Activated CD8-positive, alpha-beta T cell treated with anti-CD3 and anti-CD28 coated beads for 36 hours (primary cell): ENCODE measurements at regions of chr15 and their contacts with region 1.

Region 1: DNA sequence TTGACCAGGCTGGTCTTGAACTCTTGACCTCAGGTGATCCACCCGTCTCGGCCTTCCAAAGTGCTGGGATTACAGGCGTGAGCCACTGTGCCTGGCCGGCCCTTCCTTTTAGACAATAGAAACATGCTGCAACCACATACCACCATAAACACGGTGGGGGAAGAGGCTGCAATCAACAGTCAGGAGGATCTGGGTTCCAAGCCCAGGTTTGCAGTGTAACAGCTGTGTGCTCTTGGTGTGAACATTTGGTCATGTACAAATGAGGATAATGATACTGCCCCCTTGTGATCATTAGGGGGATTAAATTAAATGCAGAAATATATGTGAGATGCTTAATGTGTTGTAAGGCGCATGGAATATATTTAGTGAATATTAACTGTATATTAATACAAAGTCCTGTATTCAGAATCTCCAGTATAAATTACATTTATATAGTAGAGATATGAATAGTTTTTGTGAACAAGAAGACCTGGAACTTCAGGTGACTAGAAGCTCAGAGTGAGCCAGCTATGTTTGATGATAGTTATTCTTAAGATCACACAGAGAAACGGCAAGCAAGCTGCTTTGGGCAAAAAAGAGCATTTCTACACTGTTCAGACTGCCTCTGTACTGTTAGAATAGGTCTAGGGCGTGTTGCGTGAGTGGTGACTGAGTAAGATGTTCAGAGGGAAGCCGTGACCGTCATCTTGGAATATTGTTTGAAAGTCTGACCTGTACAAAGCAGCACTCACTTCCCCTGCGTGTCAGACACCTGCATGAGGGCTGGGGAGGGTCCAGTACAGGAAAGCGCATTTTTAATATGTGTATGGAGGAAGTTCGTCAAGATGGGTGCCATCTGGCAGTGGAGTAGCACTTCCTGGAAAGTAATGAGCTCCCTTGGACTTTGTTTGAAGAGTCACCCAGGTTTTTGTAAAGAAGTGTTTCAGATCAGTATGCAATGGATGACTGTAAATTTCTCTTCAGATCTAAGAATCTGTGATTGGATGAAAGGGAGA is 125.8 kb downstream of the PGPEP1L start:
- DNase-seq: peak; percentile 14
- ATAC-seq: peak; percentile 51
- H3K4me3 Mint-ChIP-seq: no peak overlapping the region
- H3K27ac Mint-ChIP-seq: no peak overlapping the region
- H3K4me1 Mint-ChIP-seq: peaks cover 11% of the 10 kb centered on the region
- H3K27me3 Mint-ChIP-seq: no peaks in the 10 kb centered on the region
- CTCF ChIP-seq: peak; percentile 77

Region 2: GRCh38 chr15:98779463-98780071 is 102.3 kb before region 1 on chr15:
- CTCF ChIA-PET with region 1: interaction called, 53 read pairs
- POLR2A ChIA-PET with region 1: interaction called, 3 read pairs
- intact Hi-C with region 1: no loop called
- DNase-seq: peak; percentile 84
- ATAC-seq: peak; percentile 84
- H3K4me3 Mint-ChIP-seq: peak overlapping the region; percentile 20
- H3K27ac Mint-ChIP-seq: no peak overlapping the region
- H3K4me1 Mint-ChIP-seq: peaks cover 37% of the 10 kb centered on the region
- H3K27me3 Mint-ChIP-seq: no peaks in the 10 kb centered on the region
- CTCF ChIP-seq: peak; percentile 94

Region 3: GRCh38 chr15:98865397-98866339 is 16.2 kb before region 1 on chr15:
- CTCF ChIA-PET with region 1: interaction called, 22 read pairs
- POLR2A ChIA-PET with region 1: no interaction called
- intact Hi-C with region 1: no loop called
- DNase-seq: peak; percentile 75
- ATAC-seq: peak; percentile 92
- H3K4me3 Mint-ChIP-seq: peak overlapping the region; percentile 70
- H3K27ac Mint-ChIP-seq: peak overlapping the region; percentile 88
- H3K4me1 Mint-ChIP-seq: peaks cover 27% of the 10 kb centered on the region
- H3K27me3 Mint-ChIP-seq: no peaks in the 10 kb centered on the region
- CTCF ChIP-seq: no peak

Region 4: GRCh38 chr15:98893407-98893806 is 11.6 kb after region 1 on chr15:
- CTCF ChIA-PET with region 1: interaction called, 14 read pairs
- POLR2A ChIA-PET with region 1: no interaction called
- intact Hi-C with region 1: no loop called
- DNase-seq: no peak
- ATAC-seq: no peak
- H3K4me3 Mint-ChIP-seq: no peak overlapping the region
- H3K27ac Mint-ChIP-seq: no peak overlapping the region
- H3K4me1 Mint-ChIP-seq: no peaks in the 10 kb centered on the region
- H3K27me3 Mint-ChIP-seq: no peaks in the 10 kb centered on the region
- CTCF ChIP-seq: no peak

Region 5: DNA sequence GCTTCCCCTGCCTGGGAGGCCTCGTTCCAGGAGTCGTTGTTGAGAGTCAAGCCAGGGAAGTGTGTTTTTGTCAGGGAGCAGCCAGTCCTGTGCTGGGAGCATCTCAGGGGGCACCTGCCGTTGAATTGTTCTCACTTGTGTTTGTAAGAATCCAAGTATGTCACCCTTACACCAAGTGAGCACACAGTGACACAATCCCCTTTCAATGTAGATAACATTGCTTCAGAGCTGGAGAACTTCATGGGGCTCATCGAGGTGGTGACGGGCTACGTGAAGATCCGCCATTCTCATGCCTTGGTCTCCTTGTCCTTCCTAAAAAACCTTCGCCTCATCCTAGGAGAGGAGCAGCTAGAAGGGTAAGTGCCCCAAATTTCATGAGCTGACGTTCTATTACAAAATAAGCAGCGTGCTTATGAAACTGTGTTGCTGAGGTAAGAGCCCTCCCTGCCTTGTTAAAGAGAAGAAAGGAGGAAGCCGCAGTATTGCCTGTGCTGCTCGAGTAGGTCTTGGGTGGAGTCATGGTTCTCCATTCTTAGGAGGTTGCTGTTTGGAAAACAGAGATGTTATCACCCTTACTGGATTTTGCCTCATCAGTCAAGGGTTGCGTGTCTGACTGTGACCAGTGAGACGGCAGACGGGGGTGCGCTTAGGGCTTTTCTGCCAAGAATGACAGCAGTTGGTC is 17.6 kb after region 1 on chr15:
- CTCF ChIA-PET with region 1: interaction called, 12 read pairs
- POLR2A ChIA-PET with region 1: interaction called, 3 read pairs
- intact Hi-C with region 1: no loop called
- DNase-seq: no peak
- ATAC-seq: no peak
- H3K4me3 Mint-ChIP-seq: no peak overlapping the region
- H3K27ac Mint-ChIP-seq: no peak overlapping the region
- H3K4me1 Mint-ChIP-seq: peaks cover 9% of the 10 kb centered on the region
- H3K27me3 Mint-ChIP-seq: no peaks in the 10 kb centered on the region
- CTCF ChIP-seq: no peak

Region 6: DNA sequence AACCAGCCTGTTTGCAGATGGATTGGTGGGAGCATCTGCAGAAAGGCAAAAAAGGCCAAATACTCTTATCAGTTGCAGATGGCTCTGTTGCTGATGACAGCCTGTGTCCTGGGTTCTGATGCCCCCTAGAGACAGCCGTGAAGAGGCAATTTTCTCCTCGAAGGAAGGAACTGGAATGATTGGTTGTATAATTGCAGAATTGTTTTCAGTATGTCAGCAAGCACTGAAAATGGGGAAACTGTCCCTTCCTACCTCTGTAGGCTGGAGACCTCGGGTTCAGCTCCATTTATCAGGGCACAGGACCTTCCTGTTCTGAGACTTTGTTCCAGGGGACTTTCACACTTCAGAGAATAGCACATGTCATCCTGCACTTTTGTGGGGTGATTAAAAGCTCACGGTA is 22.7 kb after region 1 on chr15:
- CTCF ChIA-PET with region 1: interaction called, 12 read pairs
- POLR2A ChIA-PET with region 1: interaction called, 3 read pairs
- intact Hi-C with region 1: no loop called
- DNase-seq: peak; percentile 13
- ATAC-seq: no peak
- H3K4me3 Mint-ChIP-seq: no peak overlapping the region
- H3K27ac Mint-ChIP-seq: no peak overlapping the region
- H3K4me1 Mint-ChIP-seq: peaks cover 9% of the 10 kb centered on the region
- H3K27me3 Mint-ChIP-seq: no peaks in the 10 kb centered on the region
- CTCF ChIP-seq: no peak

Region 7: DNA sequence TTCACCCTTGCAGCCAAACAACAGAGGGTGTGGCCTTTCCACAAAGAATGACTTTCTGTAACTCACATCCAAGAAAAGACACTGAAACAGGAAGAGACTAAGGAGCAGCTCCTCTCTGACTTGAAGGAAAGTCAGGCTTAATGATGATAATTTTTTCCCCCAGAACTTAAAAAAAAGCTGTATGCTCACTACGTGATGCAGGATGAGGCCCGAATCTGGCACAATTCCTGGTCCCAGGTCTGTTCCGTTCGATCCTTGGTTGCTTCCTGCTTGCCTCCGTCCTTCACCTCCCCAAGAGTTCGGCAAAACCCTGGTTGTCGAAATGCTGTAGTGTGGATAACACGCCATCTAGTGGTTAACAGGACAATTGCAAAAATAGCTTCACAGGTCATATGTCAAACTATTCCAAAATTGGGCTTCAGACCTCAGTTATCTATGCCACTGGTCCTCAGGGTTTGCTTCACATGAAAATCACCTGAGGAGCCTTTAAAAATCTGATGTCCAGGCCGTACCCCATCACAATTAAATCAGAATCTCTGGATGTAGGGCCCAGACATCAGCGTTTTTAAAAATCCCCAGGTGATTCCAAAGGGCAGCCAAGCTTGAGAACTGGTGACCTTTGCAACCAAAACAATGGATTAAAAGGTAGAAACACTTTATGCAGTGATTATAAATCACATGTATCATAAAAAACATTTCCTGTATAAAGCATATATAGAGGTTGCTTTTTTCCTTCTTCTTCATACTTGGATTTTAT is 194.9 kb after region 1 on chr15:
- CTCF ChIA-PET with region 1: interaction called, 12 read pairs
- POLR2A ChIA-PET with region 1: no interaction called
- intact Hi-C with region 1: no loop called
- DNase-seq: peak; percentile 47
- ATAC-seq: peak; percentile 80
- H3K4me3 Mint-ChIP-seq: peak overlapping the region; percentile 69
- H3K27ac Mint-ChIP-seq: no peak overlapping the region
- H3K4me1 Mint-ChIP-seq: peaks cover 5% of the 10 kb centered on the region
- H3K27me3 Mint-ChIP-seq: no peaks in the 10 kb centered on the region
- CTCF ChIP-seq: peak; percentile 74